ENCODE measurements at regions of chr1 and their contacts with region 1.

Region 1: DNA sequence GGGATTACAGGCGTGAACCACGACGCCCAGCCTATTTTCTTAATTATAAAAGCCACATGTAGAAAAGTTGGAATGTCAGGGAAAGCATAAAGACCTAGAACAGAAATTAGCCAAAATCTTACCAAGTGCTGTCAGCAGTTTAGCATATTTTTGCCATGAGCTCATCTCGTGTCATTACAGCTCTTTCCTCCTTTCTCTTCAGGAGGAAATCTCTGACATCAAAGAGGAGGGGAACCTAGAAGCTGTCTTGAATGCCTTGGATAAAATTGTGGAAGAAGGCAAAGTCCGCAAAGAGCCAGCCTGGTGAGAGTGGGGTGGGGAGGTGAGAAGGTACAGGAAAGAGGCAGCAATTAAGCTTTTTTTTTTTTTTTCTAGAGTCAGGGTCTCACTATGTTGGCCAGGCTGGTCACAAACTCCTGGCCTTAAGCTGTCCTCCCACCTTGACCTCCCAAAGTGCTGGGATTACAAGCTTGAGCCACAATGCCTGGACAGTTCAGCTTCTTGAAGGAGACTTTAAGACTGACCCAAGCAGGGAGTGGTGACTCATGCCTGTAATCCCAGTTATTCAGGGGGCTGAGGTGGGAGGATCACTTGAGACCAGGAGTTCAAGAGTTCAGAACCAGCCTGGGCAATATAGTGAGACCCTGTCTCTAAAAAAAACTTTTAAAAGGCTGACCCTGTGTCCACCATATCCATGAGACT is 8.4 kb upstream of the BGLAP start:
- DNase-seq: peak; percentile 60
- H3K4me3 ChIP-seq: no peak overlapping the region
- H3K27me3 ChIP-seq: no peaks in the 10 kb centered on the region
- CTCF ChIP-seq: no peak

Region 2: DNA sequence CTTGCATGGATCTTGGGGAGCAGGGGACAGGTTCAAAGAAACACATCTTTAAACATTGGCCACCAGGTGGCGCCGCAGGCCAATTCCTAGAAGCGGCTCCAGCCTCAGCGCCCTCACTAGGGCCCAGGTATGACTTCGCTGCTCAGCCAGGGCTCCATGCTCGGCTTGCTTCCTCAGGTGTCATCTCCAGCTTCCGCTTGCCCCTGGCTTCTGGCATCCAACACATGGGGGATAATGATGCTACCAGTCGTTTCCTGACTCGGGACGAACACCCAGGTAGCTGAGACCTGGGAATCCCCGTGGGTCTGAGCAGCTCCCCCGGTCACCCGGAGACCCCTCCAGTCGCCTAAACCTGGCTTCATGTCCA is 142.8 kb before region 1 on chr1:
- CTCF ChIA-PET with region 1: interaction called, 11 read pairs
- POLR2A ChIA-PET with region 1: interaction called, 11 read pairs
- DNase-seq: no peak
- H3K4me3 ChIP-seq: no peak overlapping the region
- H3K27me3 ChIP-seq: no peaks in the 10 kb centered on the region
- CTCF ChIP-seq: peak; percentile 72

Region 3: DNA sequence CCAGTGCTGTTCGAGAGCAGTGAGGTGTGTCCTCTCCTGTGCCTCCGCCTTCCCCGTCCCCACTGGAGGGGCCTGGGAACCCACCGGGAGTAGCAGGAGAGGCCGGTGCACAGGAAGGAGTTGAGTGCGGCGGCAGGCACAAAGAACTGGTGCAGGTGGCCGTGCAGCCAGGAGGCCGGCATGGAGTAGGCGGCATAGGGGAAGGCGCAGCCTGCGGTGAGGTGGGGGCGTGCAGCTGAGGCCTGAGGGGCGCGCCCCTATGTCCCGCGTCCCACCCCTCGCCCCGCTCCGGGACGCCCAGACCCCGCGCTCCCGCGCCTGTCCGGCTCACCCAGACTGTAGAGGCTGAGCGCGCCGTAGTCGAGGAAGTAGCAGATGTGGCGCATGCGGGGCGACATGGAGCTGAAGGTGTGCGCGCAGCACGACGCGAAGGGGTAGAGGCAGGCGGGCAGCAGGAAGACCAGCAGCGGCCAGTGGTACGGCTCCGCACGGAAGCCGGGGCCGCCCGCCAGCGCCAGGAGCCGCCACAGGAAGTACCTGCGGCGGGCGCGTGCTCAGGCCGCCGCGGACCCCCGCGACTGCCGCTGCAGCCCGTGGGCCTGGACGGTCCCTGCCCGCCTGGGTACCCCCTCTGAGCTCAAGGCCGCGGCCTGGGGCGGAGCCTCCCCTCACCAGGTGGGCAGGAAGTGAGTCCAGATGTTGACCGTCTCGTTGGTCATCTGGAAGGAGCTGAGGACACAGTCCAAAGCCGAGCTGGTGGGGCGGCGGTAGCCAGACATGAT is 12.1 kb after region 1 on chr1:
- CTCF ChIA-PET with region 1: interaction called, 3 read pairs
- POLR2A ChIA-PET with region 1: interaction called, 15 read pairs
- DNase-seq: no peak
- H3K4me3 ChIP-seq: peak overlapping the region; percentile 26
- H3K27me3 ChIP-seq: peaks cover 1% of the 10 kb centered on the region; the same call in 1 of the 2 replicates
- CTCF ChIP-seq: no peak

Region 4: GRCh38 chr1:156295391-156295947 is 61.9 kb after region 1 on chr1 and contains the start of gene GLMP:
- CTCF ChIA-PET with region 1: no interaction called
- POLR2A ChIA-PET with region 1: no interaction called
- DNase-seq: no peak
- H3K4me3 ChIP-seq: peak within 1 kb of the TSS; percentile 69
- H3K27me3 ChIP-seq: no peaks in the 10 kb centered on the region
- CTCF ChIP-seq: no peak
- polyA plus RNA-seq, gene GLMP: 31.9 and 41.1 TPM in 2 replicates

Region 5: DNA sequence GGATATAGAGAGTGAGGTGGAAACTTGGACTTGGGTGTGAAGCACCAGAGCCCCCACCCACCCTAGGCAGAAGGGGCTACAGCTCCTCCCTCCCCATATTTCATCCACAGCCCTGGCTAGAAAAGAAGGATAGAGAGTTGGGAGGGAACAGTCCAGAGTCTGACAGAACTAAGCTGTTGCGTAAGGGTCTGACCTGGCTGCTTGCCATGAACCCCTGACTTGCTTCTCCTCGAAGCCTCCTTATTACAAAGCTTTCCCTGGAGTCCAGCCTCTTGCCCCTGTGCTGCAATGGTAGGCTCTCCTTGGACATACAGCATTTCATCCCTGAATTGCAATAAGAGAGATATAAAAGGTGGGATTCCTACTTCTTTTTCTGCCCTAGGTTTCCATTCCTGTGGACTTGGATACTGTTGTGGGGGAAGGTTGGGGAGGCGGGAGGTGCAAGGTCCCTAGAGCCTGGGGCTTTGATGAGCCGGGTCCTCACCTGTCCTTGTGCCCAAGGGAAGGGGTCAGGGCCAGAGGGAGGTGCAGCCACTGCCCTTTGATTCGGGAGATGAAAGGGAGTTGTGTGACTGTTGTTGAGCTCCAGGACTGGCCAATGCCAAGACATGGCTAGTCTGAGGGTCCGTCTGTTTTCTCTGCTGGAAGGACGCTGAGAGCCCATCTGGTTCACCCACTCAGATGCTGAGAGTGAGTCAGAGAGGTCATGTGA is 138.1 kb after region 1 on chr1:
- CTCF ChIA-PET with region 1: no interaction called
- POLR2A ChIA-PET with region 1: no interaction called
- DNase-seq: no peak
- H3K4me3 ChIP-seq: no peak overlapping the region
- H3K27me3 ChIP-seq: peaks cover 15% of the 10 kb centered on the region
- CTCF ChIP-seq: no peak

Measured in BJ (cell line).